Heart right ventricle (tissue), 16 donors: ENCODE measurements at regions of chr12 and their contacts with region 1.

Region 1: DNA sequence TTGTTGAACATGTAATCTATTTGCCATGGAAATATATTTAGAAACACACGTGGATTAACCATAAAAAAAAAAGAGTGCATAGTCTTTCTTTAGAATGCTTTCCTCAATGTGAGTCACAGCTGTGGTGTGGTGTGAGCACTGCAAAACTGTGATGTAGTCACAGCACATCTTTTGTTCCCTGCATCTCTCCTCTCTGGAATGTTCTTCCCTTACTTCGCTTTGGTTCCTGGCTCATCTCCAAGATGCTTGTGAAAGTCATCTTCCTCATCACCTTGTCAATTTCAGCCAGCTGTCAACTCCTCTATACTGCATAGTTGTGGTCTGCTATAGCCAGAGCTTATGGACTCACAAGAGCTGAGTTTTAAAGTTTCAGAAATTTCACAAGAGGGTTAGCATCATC is 60.2 kb downstream of the STAB2 start:
- DNase-seq: no peak
- ATAC-seq: peak in 1 of 8 donors; percentile 80
- H3K4me3 ChIP-seq: no peak overlapping the region
- H3K27ac ChIP-seq: no peak overlapping the region
- H3K4me1 ChIP-seq: peaks cover 0 to 5% (median 0%) of the 10 kb centered on the region in 9 donors
- H3K27me3 ChIP-seq: no peaks in the 10 kb centered on the region
- CTCF ChIP-seq: no peak

Region 2: DNA sequence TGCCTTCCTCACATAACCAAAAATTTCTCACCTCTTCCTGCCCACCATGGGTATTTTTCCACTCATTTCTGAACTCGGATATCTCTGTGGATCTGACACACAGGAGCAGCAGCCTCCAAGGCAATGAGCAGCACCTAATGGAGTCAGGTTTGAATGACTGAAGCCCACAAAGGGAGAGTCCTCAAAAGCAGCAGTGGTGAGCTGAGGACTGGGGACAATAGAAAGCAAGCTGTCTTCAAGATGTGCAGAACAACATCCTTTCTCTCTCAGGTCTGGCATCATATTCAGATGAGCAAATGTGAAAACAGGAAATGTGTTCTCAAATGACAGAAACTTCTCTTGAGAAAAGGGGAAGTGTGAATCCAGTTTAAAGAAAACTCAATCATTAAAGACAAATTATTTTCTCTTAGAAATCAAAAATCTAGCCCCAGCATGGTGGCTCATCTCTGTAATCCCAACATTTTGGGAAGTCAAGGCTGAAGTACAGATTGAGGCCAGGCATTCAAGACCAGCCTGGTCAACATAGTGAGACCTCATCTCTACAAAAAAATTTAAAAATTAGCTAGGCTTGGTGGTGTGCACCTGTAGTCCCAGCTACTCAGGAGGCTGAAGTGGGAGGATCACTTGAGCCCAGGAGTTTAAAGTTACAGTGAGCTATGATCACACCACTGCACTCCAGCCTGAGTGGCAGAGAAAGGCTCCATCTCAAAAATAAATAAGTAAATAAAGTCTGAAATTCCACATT is 205.7 kb before region 1 on chr12:
- intact Hi-C with region 1: no loop called
- DNase-seq: no peak
- ATAC-seq: no peak
- H3K4me3 ChIP-seq: no peak overlapping the region
- H3K27ac ChIP-seq: peak overlapping the region in 1 of 10 donors; percentile 71
- H3K4me1 ChIP-seq: no peaks in the 10 kb centered on the region
- H3K27me3 ChIP-seq: no peaks in the 10 kb centered on the region
- CTCF ChIP-seq: no peak

Region 3: GRCh38 chr12:103548622-103549601 is 98.4 kb before region 1 on chr12:
- intact Hi-C with region 1: no loop called
- DNase-seq: peak in 1 of 2 donors; percentile 51
- ATAC-seq: peak in 5 of 8 donors; percentile 38 to 73 (median 66)
- H3K4me3 ChIP-seq: no peak overlapping the region
- H3K27ac ChIP-seq: no peak overlapping the region
- H3K4me1 ChIP-seq: no peaks in the 10 kb centered on the region
- H3K27me3 ChIP-seq: peaks cover 0 to 27% (median 7%) of the 10 kb centered on the region in 7 donors
- CTCF ChIP-seq: peak; percentile 57 to 85 (median 78)

Region 4: DNA sequence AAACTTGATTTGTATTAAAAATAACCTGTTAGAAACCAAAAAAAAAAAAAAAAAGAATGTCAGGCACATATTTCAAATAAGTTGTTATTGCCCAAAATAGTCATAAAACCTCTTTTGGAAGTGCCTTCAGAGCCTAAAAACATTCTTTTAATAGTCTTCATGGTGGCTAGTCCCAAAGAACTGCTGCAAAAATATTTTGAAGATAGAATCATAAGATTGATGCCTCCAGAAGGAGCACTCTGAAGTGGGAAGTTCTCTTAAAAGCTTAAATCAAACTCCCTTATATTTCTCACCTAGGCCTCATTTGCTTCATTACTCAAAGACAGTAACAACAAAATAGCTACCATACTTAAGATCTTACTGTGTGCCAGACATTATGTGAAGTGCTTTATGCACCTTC is 220.9 kb after region 1 on chr12:
- intact Hi-C with region 1: loop called in 1 of 10 experiments (anchors 5 kb)
- DNase-seq: no peak
- ATAC-seq: no peak
- H3K4me3 ChIP-seq: no peak overlapping the region
- H3K27ac ChIP-seq: no peak overlapping the region
- H3K4me1 ChIP-seq: no peaks in the 10 kb centered on the region
- H3K27me3 ChIP-seq: no peaks in the 10 kb centered on the region
- CTCF ChIP-seq: no peak